Ovary (tissue), 10 donors: ENCODE measurements at regions of chr3 and their contacts with region 1.

Region 1: GRCh38 chr3:165404357-165405027 is 208.3 kb upstream of the SLITRK3 start:
- DNase-seq: no peak
- H3K4me3 ChIP-seq: no peak overlapping the region
- H3K27ac ChIP-seq: no peak overlapping the region
- H3K4me1 ChIP-seq: no peaks in the 10 kb centered on the region
- H3K27me3 ChIP-seq: no peaks in the 10 kb centered on the region
- CTCF ChIP-seq: no peak
- EP300 ChIP-seq: no peak
- POLR2A ChIP-seq: no peak

Region 2: GRCh38 chr3:166549750-166550149 is 1145.3 kb after region 1 on chr3:
- intact Hi-C with region 1: loop called in 1 of 4 experiments (anchors 5 kb)
- DNase-seq: no peak
- H3K4me3 ChIP-seq: no peak overlapping the region
- H3K27ac ChIP-seq: no peak overlapping the region
- H3K4me1 ChIP-seq: no peaks in the 10 kb centered on the region
- H3K27me3 ChIP-seq: no peaks in the 10 kb centered on the region
- CTCF ChIP-seq: no peak
- EP300 ChIP-seq: no peak
- POLR2A ChIP-seq: no peak